ENCODE measurements at regions of chr2 and their contacts with region 1.

Region 1: GRCh38 chr2:30336978-30337841 is 105.9 kb downstream of the LBH start:
- DNase-seq: peak; percentile 92
- ATAC-seq: peak; percentile 90
- H3K4me3 ChIP-seq: peak overlapping the region; percentile 66
- H3K27ac ChIP-seq: peak overlapping the region; percentile 98
- H3K4me1 ChIP-seq: peaks cover 72% of the 10 kb centered on the region
- H3K27me3 ChIP-seq: no peaks in the 10 kb centered on the region
- CTCF ChIP-seq: no peak
- EP300 ChIP-seq: peak; percentile 31 to 51; a peak in 2 of 4 replicates
- POLR2A ChIP-seq: peak; percentile 56
- RAD21 ChIP-seq: 0 out of 2 replicates have a peak, but pooled peaks have one; percentile 18

Region 2: DNA sequence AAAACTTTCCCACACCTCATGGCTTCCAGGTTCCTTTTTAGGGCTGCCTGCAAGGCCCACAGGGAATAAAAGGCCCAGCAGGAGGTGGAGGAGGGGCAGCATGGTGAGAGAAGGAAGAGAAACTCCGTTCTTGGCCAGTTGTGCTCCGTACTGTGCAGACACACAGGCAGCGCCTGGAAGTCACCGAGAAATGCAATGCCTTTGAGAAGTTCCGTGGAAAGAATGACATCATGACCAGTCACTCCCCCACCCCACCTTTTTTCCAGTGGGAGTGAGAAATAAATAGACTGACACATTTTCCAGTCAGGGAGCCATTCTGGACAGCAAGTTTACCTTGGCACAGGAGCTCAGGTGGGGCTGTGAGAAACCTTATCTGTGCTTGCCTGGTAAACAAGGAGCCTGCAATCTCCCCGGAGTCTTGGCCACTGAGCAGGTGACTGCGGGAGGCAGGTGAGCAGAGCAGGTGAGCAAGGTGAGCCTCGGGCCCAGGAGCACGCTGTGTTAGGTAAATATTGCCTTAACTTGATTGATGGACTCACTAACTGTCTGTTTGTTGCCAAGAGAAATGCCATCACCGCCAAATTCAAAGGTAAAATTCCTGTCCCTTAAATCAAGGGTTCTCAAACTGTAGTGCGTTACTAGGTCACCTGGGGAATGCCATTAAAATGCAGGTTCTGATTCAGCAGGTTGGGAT is 119.4 kb before region 1 on chr2:
- CTCF ChIA-PET with region 1: interaction called, 103 read pairs
- POLR2A ChIA-PET with region 1: interaction called, 4 read pairs
- RAD21 ChIA-PET with region 1: interaction called, 116 read pairs
- SMC1A ChIA-PET with region 1: interaction called, 282 read pairs
- in situ Hi-C with region 1: no loop called
- intact Hi-C with region 1: no loop called
- DNase-seq: peak; percentile 48
- ATAC-seq: peak; percentile 87
- H3K4me3 ChIP-seq: no peak overlapping the region
- H3K27ac ChIP-seq: no peak overlapping the region
- H3K4me1 ChIP-seq: peaks cover 10% of the 10 kb centered on the region
- H3K27me3 ChIP-seq: no peaks in the 10 kb centered on the region
- CTCF ChIP-seq: no peak
- EP300 ChIP-seq: no peak
- POLR2A ChIP-seq: no peak
- RAD21 ChIP-seq: no peak

Region 3: DNA sequence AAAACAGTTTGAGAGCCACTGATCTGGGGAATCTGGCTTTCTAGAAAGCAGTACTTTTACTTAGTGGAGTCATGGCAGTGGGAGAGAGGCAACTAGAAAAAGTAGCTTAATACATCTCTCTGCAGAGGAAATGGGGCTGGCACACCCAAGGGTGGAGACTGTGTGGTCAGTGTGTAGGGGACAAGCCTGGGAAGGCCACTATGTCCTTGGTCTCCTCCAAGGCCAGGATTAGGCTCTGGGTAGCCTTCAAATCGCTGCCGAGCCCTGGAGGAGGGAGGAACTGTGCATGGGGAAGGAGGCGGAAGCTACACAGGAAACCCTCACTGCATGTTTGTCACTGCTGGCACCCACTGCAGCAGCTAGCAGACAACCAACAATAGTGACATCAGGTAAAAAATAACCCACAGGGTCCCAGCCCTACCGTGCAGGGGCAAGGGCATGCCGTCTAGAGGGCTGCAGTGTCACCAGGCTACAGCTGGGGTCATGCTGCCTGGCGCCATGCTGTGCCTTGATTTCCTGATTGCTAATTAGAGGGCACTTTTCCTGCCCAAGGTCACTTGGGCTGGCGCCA is 71.1 kb before region 1 on chr2:
- CTCF ChIA-PET with region 1: interaction called, 11 read pairs
- POLR2A ChIA-PET with region 1: no interaction called
- RAD21 ChIA-PET with region 1: interaction called, 18 read pairs
- SMC1A ChIA-PET with region 1: interaction called, 24 read pairs
- in situ Hi-C with region 1: no loop called
- intact Hi-C with region 1: no loop called
- DNase-seq: no peak
- ATAC-seq: peak; percentile 78
- H3K4me3 ChIP-seq: no peak overlapping the region
- H3K27ac ChIP-seq: no peak overlapping the region
- H3K4me1 ChIP-seq: peaks cover 6% of the 10 kb centered on the region
- H3K27me3 ChIP-seq: no peaks in the 10 kb centered on the region
- CTCF ChIP-seq: no peak
- EP300 ChIP-seq: no peak
- POLR2A ChIP-seq: no peak
- RAD21 ChIP-seq: no peak

Region 4: DNA sequence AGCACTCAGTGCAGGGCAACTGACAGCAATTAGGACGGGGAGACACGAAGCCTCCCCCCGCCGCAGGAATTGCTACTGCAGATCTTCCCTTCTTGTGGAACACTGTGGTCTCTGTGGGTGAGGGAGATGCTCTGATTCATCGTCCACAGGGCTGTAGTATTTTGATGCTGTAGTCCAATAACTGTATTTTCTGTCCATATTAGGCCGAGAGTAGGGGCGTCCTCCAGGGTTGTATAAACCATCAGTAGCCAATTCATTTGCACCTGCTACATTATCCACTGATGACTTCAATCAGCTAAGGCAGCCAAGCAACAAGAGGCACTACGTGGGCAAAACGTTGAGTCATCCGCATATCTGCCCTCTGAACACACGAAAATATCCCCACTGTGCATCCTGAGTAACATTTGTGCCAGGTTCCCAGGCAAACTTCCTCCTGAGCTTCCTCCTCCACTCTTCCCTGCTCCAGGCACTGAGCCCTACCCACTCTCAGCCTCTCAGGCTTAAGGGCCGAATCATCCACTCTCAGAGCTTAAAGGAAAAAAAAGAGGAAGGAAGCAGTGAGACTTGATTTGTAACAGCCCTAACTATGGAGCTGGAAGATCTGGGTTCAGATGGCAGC is 43.8 kb before region 1 on chr2:
- CTCF ChIA-PET with region 1: interaction called, 56 read pairs
- POLR2A ChIA-PET with region 1: interaction called, 29 read pairs
- RAD21 ChIA-PET with region 1: interaction called, 108 read pairs
- SMC1A ChIA-PET with region 1: interaction called, 96 read pairs
- in situ Hi-C with region 1: no loop called
- intact Hi-C with region 1: loop called (anchors 1 kb)
- DNase-seq: no peak
- ATAC-seq: peak; percentile 49
- H3K4me3 ChIP-seq: no peak overlapping the region
- H3K27ac ChIP-seq: no peak overlapping the region
- H3K4me1 ChIP-seq: peaks cover 11% of the 10 kb centered on the region; the same call in 1 of the 2 replicates
- H3K27me3 ChIP-seq: no peaks in the 10 kb centered on the region
- CTCF ChIP-seq: no peak
- EP300 ChIP-seq: no peak
- POLR2A ChIP-seq: no peak
- RAD21 ChIP-seq: no peak

Region 5: GRCh38 chr2:30412047-30412970 is 75.1 kb after region 1 on chr2:
- CTCF ChIA-PET with region 1: interaction called, 4 read pairs
- POLR2A ChIA-PET with region 1: no interaction called
- RAD21 ChIA-PET with region 1: no interaction called
- SMC1A ChIA-PET with region 1: interaction called, 11 read pairs
- in situ Hi-C with region 1: no loop called
- intact Hi-C with region 1: no loop called
- DNase-seq: no peak
- ATAC-seq: no peak
- H3K4me3 ChIP-seq: no peak overlapping the region
- H3K27ac ChIP-seq: no peak overlapping the region
- H3K4me1 ChIP-seq: peaks cover 8% of the 10 kb centered on the region; the same call in 1 of the 2 replicates
- H3K27me3 ChIP-seq: no peaks in the 10 kb centered on the region
- CTCF ChIP-seq: no peak
- EP300 ChIP-seq: no peak
- POLR2A ChIP-seq: no peak
- RAD21 ChIP-seq: no peak

Region 6: GRCh38 chr2:30475542-30475941 is 138.3 kb after region 1 on chr2:
- CTCF ChIA-PET with region 1: interaction called, 25 read pairs
- POLR2A ChIA-PET with region 1: interaction called, 4 read pairs
- RAD21 ChIA-PET with region 1: interaction called, 6 read pairs
- SMC1A ChIA-PET with region 1: interaction called, 31 read pairs
- in situ Hi-C with region 1: no loop called
- intact Hi-C with region 1: no loop called
- DNase-seq: no peak
- ATAC-seq: no peak
- H3K4me3 ChIP-seq: no peak overlapping the region
- H3K27ac ChIP-seq: no peak overlapping the region
- H3K4me1 ChIP-seq: peaks cover 3% of the 10 kb centered on the region; the same call in 1 of the 2 replicates
- H3K27me3 ChIP-seq: no peaks in the 10 kb centered on the region
- CTCF ChIP-seq: no peak; a peak in 1 of 6 replicates
- EP300 ChIP-seq: no peak
- POLR2A ChIP-seq: no peak
- RAD21 ChIP-seq: peak; percentile 35